ENCODE measurements at regions of chr21 and their contacts with region 1.

Region 1: DNA sequence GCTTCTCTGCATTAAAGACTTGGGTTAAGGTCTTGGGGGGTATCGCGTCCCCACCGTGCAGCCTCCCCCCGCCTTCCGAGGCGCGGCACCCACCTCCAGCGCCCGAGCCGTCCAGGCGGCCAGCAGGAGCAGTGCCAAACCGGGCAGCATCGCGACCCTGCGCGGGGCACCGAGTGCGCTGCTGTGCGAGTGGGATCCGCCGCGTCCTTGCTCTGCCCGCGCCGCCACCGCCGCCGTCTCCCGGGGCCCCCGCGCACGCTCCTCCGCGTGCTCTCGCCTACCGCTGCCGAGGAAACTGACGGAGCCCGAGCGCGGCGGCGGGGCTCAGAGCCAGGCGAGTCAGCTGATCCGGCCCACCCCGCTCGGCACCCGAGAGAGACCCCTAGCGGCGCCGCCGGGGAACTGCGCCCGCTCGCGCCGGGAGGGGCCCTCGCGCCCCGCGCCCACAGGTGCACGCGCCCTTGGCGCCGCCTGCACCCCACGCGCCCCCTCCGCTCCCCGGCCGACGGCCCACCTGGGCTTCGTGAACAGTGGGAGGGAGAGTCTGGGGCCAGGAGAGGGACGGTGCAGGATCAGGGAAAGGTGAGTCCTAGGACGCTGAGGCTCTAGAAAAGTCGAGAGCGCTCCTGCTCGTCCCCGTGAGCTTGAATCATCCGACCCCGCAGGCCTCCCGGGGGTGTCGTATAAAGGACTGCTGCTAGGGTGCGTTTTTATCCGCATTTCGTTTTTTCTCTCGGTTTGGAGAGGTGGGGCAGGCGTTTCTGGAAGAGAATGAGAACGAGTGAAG is at the start of gene APP:
- DNase-seq: peak; percentile 94
- ATAC-seq: peak; percentile 89
- total RNA-seq, gene APP: 356 TPM

Region 2: DNA sequence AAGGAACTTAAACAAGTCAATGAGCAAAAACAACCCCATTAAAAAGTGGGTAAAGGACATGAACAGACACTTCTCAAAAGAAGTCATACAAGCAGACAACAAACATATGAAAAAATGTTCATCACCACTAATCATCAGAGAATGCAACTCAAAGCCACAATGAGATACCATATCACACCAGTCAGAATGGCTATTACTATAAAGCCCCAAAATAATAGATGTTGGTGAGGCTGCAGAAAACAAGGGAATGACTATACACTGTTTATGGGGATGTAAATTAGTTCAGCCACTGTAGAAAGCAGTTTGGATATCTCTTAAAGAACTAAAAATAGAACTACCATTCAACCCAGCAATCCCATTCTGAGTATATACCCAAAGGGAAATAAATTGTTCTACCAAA is 614.6 kb before region 1 on chr21:
- intact Hi-C with region 1: no loop called
- DNase-seq: no peak
- ATAC-seq: no peak

Region 3: GRCh38 chr21:25688275-25689155 is 482.1 kb before region 1 on chr21:
- intact Hi-C with region 1: no loop called
- DNase-seq: no peak
- ATAC-seq: peak; percentile 48

Region 4: DNA sequence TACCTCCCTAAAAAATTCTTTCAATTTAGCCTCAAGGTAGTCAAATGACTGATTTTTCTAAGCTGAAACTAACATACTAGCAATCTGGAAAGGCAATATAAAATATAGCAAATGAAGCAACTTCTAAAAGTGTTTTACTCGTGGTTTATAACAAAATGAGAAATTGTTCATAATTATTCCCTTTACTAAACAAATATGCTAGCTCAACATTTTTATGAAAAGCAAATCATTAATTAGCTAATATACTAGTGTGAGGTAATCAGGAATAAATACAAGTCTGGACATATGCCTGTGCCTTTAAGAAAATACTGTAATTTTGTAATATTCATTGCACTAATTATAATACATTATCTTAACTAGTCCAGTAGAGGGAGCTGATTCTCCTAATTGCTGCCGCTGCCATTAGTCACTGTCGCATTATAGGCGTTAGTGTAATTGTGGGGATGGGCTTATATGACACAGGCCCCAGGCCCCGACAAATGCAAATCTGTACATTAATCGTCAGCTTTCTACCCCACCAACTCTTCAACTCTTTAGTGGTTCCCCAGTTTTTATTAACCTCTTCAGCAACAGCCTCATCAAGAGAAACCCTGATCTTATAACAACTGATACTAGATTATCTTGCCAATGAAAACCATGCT is 275.0 kb before region 1 on chr21:
- intact Hi-C with region 1: loop called (anchors 10 kb)
- DNase-seq: no peak
- ATAC-seq: peak; percentile 63

Measured in left ventricle myocardium superior (tissue), 1 donor.